OCI-LY7 (cell line): ENCODE measurements at regions of chr5 and their contacts with region 1.

Region 1: DNA sequence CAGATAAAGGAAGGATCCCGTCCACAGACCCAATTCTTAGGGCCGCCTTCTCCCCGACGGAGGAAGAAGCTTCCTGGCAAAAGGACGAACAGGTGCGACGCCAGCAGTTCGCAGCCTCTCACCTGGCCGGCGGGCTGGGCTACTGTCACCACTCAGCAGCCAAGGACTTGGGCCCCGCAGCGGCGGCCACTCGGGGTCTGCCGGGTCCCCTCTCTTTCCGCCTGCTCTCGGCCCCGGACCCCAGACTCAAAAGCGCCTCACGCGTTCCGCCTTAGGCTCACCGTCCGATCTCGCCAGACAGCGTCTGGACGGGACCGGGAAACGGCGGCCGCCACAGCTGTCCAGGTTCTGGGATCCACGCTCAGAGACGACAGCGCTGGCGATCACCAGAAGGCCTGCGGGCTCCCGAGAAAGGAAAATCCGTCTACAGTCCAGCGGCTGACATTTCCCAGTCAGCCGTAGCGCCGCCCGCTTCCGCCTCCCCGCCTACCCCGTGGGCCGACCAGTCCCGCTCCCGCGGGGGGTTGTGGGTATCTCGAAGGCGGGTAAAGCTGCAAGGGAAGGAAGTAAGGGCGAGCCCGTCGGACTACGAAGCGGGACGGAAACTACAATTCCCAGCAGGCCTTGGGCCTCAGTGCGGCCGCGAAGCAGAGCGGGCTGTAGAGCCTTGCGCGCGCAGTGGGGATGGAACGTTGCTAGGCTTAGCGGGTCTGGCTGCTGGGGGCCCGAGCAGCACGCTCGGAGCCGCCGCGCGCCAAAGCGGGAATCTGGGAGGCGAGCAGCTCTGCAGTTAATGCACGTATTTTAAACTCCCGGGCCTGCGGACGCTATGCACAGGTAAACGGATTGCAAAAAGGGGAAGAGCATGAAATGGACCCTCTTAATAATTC is at the starts of genes LMBRD2 and SKP2:
- DNase-seq: peak; percentile 98
- H3K4me3 ChIP-seq: peak within 1 kb of the TSS; percentile 85
- H3K27ac ChIP-seq: peak within 1 kb of the TSS; percentile 64
- H3K4me1 ChIP-seq: peaks cover 23% of the 10 kb centered on the region
- CTCF ChIP-seq: no peak
- total RNA-seq, gene LMBRD2: 9.1 and 32.0 TPM in 2 replicates
- total RNA-seq, gene SKP2: 70.5 and 71.8 TPM in 2 replicates

Region 2: DNA sequence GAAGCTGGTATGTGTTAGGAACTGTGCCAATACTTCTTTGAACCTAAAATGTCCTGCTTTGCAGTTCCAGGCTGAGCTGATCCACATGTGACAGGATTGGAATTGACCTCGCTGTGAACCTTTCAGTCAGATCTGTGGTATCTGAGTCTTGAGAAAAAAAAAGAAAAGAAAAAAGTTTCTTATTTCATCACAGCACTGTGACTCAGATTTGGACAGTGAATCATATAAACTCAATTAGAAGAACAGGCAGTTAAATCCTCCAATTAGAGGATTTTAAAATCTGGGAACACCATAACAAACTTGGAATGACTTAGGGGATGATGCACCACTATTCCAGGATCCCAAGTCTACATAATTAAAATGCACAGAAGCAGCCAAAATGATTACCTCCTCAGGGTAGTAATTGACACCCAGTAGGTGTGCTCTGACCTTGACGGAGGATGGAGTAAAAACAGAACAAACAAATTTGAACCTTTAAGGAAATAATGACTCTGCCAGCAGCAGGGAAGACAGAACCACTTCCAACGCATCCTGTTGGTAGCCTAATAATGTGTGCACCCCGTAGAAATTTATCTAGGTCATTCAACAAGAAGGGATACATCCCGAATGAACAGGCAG is 1553.4 kb before region 1 on chr5:
- CTCF ChIA-PET with region 1: no interaction called
- POLR2A ChIA-PET with region 1: no interaction called
- intact Hi-C with region 1: no loop called
- DNase-seq: no peak
- H3K4me3 ChIP-seq: no peak overlapping the region
- H3K27ac ChIP-seq: no peak overlapping the region
- H3K4me1 ChIP-seq: no peaks in the 10 kb centered on the region
- CTCF ChIP-seq: no peak

Region 3: GRCh38 chr5:35902046-35902676 is 249.5 kb before region 1 on chr5:
- CTCF ChIA-PET with region 1: no interaction called
- POLR2A ChIA-PET with region 1: no interaction called
- intact Hi-C with region 1: loop called (anchors 5 kb)
- DNase-seq: no peak
- H3K4me3 ChIP-seq: no peak overlapping the region
- H3K27ac ChIP-seq: peak overlapping the region; percentile 54
- H3K4me1 ChIP-seq: peaks cover 87% of the 10 kb centered on the region
- CTCF ChIP-seq: no peak

Region 4: GRCh38 chr5:36125868-36126267 is 25.8 kb before region 1 on chr5:
- CTCF ChIA-PET with region 1: no interaction called
- POLR2A ChIA-PET with region 1: interaction called, 10 read pairs
- intact Hi-C with region 1: no loop called
- DNase-seq: no peak
- H3K4me3 ChIP-seq: no peak overlapping the region
- H3K27ac ChIP-seq: no peak overlapping the region
- H3K4me1 ChIP-seq: no peaks in the 10 kb centered on the region
- CTCF ChIP-seq: no peak

Region 5: GRCh38 chr5:36135994-36136393 is 15.7 kb before region 1 on chr5:
- CTCF ChIA-PET with region 1: no interaction called
- POLR2A ChIA-PET with region 1: no interaction called
- intact Hi-C with region 1: no loop called
- DNase-seq: no peak
- H3K4me3 ChIP-seq: no peak overlapping the region
- H3K27ac ChIP-seq: no peak overlapping the region
- H3K4me1 ChIP-seq: no peaks in the 10 kb centered on the region
- CTCF ChIP-seq: no peak

Region 6: GRCh38 chr5:36168737-36169136 is 17.1 kb after region 1 on chr5:
- CTCF ChIA-PET with region 1: interaction called, 3 read pairs
- POLR2A ChIA-PET with region 1: interaction called, 17 read pairs
- intact Hi-C with region 1: no loop called
- DNase-seq: no peak
- H3K4me3 ChIP-seq: no peak overlapping the region
- H3K27ac ChIP-seq: no peak overlapping the region
- H3K4me1 ChIP-seq: no peaks in the 10 kb centered on the region
- CTCF ChIP-seq: no peak

Region 7: DNA sequence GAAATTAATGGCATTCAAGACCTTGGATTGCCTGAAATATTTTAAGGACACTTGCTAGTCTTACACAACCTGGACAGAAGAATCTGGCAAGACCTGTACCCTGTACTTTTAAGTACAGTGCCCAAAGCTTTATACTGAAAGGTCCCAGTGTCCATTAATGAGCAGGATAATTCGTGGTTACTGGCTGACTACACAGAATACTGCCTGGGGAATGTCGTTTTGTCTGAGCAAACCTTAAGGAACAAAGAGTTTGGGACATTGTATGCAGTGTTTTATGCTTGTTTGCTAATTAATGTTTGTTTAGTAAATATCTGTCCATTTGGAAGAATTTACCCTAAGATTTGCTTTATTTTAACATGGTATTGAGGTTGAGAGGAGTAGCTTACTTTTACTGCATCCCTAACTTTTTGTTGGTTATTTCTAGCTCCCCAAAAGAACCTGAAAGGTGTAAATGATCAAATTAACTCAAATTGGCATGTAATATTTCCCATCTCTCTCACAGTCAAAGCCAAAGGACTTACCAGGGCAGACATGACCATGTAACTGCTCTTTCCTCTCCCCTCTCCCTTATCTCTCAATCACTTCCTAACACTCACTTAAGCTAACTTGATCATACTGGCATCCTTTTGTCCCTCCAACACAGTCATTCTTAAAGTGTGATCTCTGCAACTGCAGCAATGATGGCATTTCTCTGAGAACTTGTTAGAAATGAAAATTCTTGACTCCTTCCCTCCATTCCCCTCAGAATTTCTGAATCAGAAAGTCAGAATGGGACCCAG is 134.3 kb after region 1 on chr5:
- CTCF ChIA-PET with region 1: no interaction called
- POLR2A ChIA-PET with region 1: no interaction called
- intact Hi-C with region 1: no loop called
- DNase-seq: no peak
- H3K4me3 ChIP-seq: no peak overlapping the region
- H3K27ac ChIP-seq: no peak overlapping the region
- H3K4me1 ChIP-seq: peaks cover 7% of the 10 kb centered on the region
- CTCF ChIP-seq: no peak